Activated T-helper 2 cell treated with anti-CD3 and anti-CD28 coated beads, Interferon-gamma antibody, Interleukin-2, Interleukin-4, amounts not matched to agents 10 μg/mL and 5 μg/mL and 100 μg/mL, durations not matched to agents 14 hours and 24 hours and 36 hours (primary cell): ENCODE measurements at regions of chr2 and their contacts with region 1.

Region 1: GRCh38 chr2:53724536-53724935 is 43.1 kb upstream of the CHAC2 start:
- DNase-seq: no peak
- H3K4me3 Mint-ChIP-seq: peak overlapping the region; percentile 3
- H3K27ac Mint-ChIP-seq: peak overlapping the region; percentile 39
- H3K4me1 Mint-ChIP-seq: peaks cover 22% of the 10 kb centered on the region
- H3K27me3 Mint-ChIP-seq: no peaks in the 10 kb centered on the region

Region 2: DNA sequence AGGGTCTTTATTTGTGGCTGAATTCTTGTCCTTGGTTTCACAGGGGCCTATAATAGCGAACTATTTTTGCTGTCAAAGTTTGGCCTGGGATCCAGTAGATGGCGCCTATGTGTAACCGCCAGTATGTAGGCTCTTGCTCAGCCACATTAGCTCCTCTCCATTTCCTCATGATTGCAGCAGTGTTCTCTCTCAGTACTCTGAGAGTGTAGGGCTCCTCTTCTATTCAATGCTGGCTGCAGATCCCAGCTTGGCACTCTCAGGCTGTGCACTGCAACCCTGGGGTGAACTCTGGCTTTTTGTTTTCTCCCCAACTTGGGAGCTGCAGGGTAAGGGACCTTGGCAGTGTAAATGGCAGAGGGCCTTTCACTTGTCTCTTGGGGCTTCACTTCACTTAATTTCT is 301.6 kb before region 1 on chr2:
- intact Hi-C with region 1: loop called (anchors 10 kb)
- DNase-seq: peak; percentile 9
- H3K4me3 Mint-ChIP-seq: no peak overlapping the region
- H3K27ac Mint-ChIP-seq: no peak overlapping the region
- H3K4me1 Mint-ChIP-seq: no peaks in the 10 kb centered on the region
- H3K27me3 Mint-ChIP-seq: no peaks in the 10 kb centered on the region

Region 3: DNA sequence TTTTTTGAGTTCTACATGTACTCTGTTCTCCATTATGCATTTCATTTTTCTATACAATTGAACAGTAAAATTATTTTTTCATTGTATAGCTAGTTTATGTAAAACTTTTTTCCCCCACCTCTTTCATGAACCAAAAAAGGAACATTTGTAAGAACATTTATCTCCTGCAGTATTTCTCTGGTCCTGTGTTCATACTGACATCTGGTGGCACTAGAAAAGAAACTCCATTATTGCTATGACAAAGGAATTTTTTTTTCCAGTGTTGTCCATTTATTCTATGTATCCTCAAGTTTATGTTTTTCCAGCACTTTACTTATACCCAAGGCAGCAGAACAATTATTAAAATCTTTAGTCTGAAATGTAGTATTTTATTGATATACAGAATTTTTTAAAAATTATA is 15.6 kb after region 1 on chr2:
- intact Hi-C with region 1: no loop called
- DNase-seq: no peak
- H3K4me3 Mint-ChIP-seq: no peak overlapping the region
- H3K27ac Mint-ChIP-seq: no peak overlapping the region
- H3K4me1 Mint-ChIP-seq: peaks cover 20% of the 10 kb centered on the region
- H3K27me3 Mint-ChIP-seq: no peaks in the 10 kb centered on the region

Region 4: GRCh38 chr2:53767405-53768241 is 43.1 kb after region 1 on chr2 and contains the start of gene CHAC2:
- intact Hi-C with region 1: loop called (anchors 1 kb)
- DNase-seq: peak; percentile 81
- H3K4me3 Mint-ChIP-seq: peak within 1 kb of the TSS; percentile 90
- H3K27ac Mint-ChIP-seq: peak within 1 kb of the TSS; percentile 95
- H3K4me1 Mint-ChIP-seq: peaks cover 26% of the 10 kb centered on the region
- H3K27me3 Mint-ChIP-seq: no peaks in the 10 kb centered on the region
- total RNA-seq, gene CHAC2: 22.4 and 25.3 TPM in 2 replicates

Region 5: GRCh38 chr2:53941749-53942148 is 217.2 kb after region 1 on chr2:
- intact Hi-C with region 1: no loop called
- DNase-seq: no peak
- H3K4me3 Mint-ChIP-seq: no peak overlapping the region
- H3K27ac Mint-ChIP-seq: no peak overlapping the region
- H3K4me1 Mint-ChIP-seq: peaks cover 23% of the 10 kb centered on the region
- H3K27me3 Mint-ChIP-seq: no peaks in the 10 kb centered on the region